Uterus (tissue), 4 donors: ENCODE measurements at regions of chr9 and their contacts with region 1.

Region 1: GRCh38 chr9:114653556-114654159 is 3.9 kb downstream of the TEX53 start:
- DNase-seq: peak; percentile 69 to 79
- H3K4me3 ChIP-seq: no peak overlapping the region
- H3K27ac ChIP-seq: no peak overlapping the region
- H3K4me1 ChIP-seq: no peaks in the 10 kb centered on the region
- H3K27me3 ChIP-seq: no peaks in the 10 kb centered on the region
- CTCF ChIP-seq: peak; percentile 83 to 89 (median 88)
- POLR2A ChIP-seq: no peak

Region 2: GRCh38 chr9:113368982-113369869 is 1284.4 kb before region 1 on chr9:
- intact Hi-C with region 1: no loop called
- DNase-seq: no peak
- H3K4me3 ChIP-seq: no peak overlapping the region
- H3K27ac ChIP-seq: no peak overlapping the region
- H3K4me1 ChIP-seq: no peaks in the 10 kb centered on the region
- H3K27me3 ChIP-seq: no peaks in the 10 kb centered on the region
- CTCF ChIP-seq: no peak
- POLR2A ChIP-seq: no peak

Region 3: GRCh38 chr9:114405294-114406034 is 248.2 kb before region 1 on chr9:
- intact Hi-C with region 1: loop called (anchors 5 kb)
- DNase-seq: peak; percentile 80 to 85
- H3K4me3 ChIP-seq: no peak overlapping the region
- H3K27ac ChIP-seq: no peak overlapping the region
- H3K4me1 ChIP-seq: no peaks in the 10 kb centered on the region
- H3K27me3 ChIP-seq: no peaks in the 10 kb centered on the region
- CTCF ChIP-seq: peak; percentile 66 to 92 (median 88)
- POLR2A ChIP-seq: no peak

Region 4: GRCh38 chr9:114434878-114435311 is 218.8 kb before region 1 on chr9:
- intact Hi-C with region 1: loop called (anchors 10 kb)
- DNase-seq: no peak
- H3K4me3 ChIP-seq: no peak overlapping the region
- H3K27ac ChIP-seq: no peak overlapping the region
- H3K4me1 ChIP-seq: no peaks in the 10 kb centered on the region
- H3K27me3 ChIP-seq: no peaks in the 10 kb centered on the region
- CTCF ChIP-seq: peak; percentile 48 to 69 (median 63)
- POLR2A ChIP-seq: no peak